ENCODE measurements at regions of chr13 and their contacts with region 1.

Region 1: GRCh38 chr13:75694722-75695121 is 58.6 kb downstream of the LMO7 start:
- DNase-seq: peak; percentile 82
- H3K4me3 Mint-ChIP-seq: no peak overlapping the region
- H3K27ac Mint-ChIP-seq: peak overlapping the region; percentile 27
- H3K4me1 Mint-ChIP-seq: peaks cover 18% of the 10 kb centered on the region
- H3K27me3 Mint-ChIP-seq: no peaks in the 10 kb centered on the region
- CTCF ChIP-seq: no peak

Region 2: DNA sequence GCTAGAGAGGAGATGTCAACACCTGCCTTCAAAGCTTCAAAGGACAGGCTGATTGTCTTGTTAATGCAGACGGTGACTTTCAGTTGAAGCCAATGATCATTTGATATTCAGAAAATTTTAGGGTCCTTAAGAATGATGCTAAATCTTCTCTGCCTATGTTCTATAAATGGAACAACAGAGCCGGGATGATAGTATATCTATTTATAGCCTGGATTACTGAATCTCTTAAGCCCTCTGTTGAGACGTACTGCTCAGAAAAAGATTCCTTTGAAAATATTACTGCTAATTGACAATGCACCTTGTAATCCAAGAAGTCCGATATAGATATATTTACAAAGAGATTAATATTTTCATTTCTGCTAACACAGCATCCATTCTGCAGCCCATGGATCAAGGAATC is 94.4 kb before region 1 on chr13:
- CTCF ChIA-PET with region 1: no interaction called
- POLR2A ChIA-PET with region 1: no interaction called
- intact Hi-C with region 1: no loop called
- DNase-seq: no peak
- H3K4me3 Mint-ChIP-seq: no peak overlapping the region
- H3K27ac Mint-ChIP-seq: no peak overlapping the region
- H3K4me1 Mint-ChIP-seq: peaks cover 4% of the 10 kb centered on the region
- H3K27me3 Mint-ChIP-seq: no peaks in the 10 kb centered on the region
- CTCF ChIP-seq: no peak

Region 3: GRCh38 chr13:75675421-75675820 is 19.3 kb before region 1 on chr13:
- CTCF ChIA-PET with region 1: interaction called, 63 read pairs
- POLR2A ChIA-PET with region 1: interaction called, 4 read pairs
- intact Hi-C with region 1: loop called (anchors 1 kb)
- DNase-seq: peak; percentile 20
- H3K4me3 Mint-ChIP-seq: peak overlapping the region; percentile 79
- H3K27ac Mint-ChIP-seq: peak overlapping the region; percentile 93
- H3K4me1 Mint-ChIP-seq: peaks cover 8% of the 10 kb centered on the region
- H3K27me3 Mint-ChIP-seq: no peaks in the 10 kb centered on the region
- CTCF ChIP-seq: no peak

Region 4: GRCh38 chr13:75751350-75751749 is 56.6 kb after region 1 on chr13:
- CTCF ChIA-PET with region 1: interaction called, 17 read pairs
- POLR2A ChIA-PET with region 1: no interaction called
- intact Hi-C with region 1: no loop called
- DNase-seq: no peak
- H3K4me3 Mint-ChIP-seq: no peak overlapping the region
- H3K27ac Mint-ChIP-seq: no peak overlapping the region
- H3K4me1 Mint-ChIP-seq: no peaks in the 10 kb centered on the region
- H3K27me3 Mint-ChIP-seq: no peaks in the 10 kb centered on the region
- CTCF ChIP-seq: no peak

Region 5: DNA sequence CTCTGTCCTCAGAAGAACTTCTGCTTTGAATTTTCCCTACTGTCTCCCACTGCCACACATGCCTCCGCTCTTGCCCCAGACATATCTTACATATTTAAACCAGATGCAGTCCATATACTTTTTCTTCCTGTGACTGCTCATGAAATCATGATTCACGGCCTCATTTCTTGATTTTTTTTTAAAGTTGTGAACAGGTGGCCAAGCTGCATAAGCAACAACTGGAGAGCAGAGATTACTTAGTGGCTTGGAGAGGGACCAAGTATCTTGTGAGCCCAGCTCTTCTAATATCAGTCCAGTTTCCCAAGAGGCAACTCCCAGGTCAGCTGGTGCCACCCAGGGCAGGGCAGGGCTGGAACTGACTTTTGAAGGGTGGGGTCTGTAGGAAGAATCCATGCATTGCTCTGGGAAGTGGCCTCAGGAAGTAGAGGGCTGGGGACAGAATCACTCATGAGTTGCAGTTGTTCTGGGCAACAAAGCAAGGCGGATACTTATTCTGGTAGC is 93.8 kb after region 1 on chr13:
- CTCF ChIA-PET with region 1: interaction called, 35 read pairs
- POLR2A ChIA-PET with region 1: no interaction called
- intact Hi-C with region 1: loop called (anchors 5 kb)
- DNase-seq: peak; percentile 72
- H3K4me3 Mint-ChIP-seq: no peak overlapping the region
- H3K27ac Mint-ChIP-seq: no peak overlapping the region
- H3K4me1 Mint-ChIP-seq: no peaks in the 10 kb centered on the region
- H3K27me3 Mint-ChIP-seq: no peaks in the 10 kb centered on the region
- CTCF ChIP-seq: no peak

Region 6: DNA sequence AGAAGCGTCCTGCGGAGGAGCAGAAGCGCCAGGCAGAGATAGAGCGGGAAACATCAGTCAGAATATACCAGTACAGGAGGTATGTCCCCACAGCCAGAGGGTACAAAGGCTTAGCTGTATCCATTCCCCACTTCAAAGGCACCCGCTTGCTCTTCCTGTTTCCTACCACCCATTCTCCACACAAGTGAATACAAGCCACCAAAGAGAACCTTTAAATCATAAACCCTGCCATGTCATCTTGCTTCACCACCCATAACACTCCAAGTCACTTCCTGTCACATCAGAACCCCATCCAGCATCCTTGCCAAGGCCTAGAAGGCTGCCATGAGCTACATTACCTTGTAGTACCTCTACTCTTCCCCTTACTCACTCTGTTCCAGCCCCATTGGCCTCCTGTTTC is 147.2 kb after region 1 on chr13:
- CTCF ChIA-PET with region 1: interaction called, 10 read pairs
- POLR2A ChIA-PET with region 1: no interaction called
- intact Hi-C with region 1: no loop called
- DNase-seq: no peak
- H3K4me3 Mint-ChIP-seq: no peak overlapping the region
- H3K27ac Mint-ChIP-seq: peak overlapping the region; percentile 47
- H3K4me1 Mint-ChIP-seq: no peaks in the 10 kb centered on the region
- H3K27me3 Mint-ChIP-seq: no peaks in the 10 kb centered on the region
- CTCF ChIP-seq: no peak

Region 7: GRCh38 chr13:75876360-75877050 is 181.8 kb after region 1 on chr13:
- CTCF ChIA-PET with region 1: interaction called, 72 read pairs
- POLR2A ChIA-PET with region 1: no interaction called
- intact Hi-C with region 1: no loop called
- DNase-seq: peak; percentile 80
- H3K4me3 Mint-ChIP-seq: no peak overlapping the region
- H3K27ac Mint-ChIP-seq: no peak overlapping the region
- H3K4me1 Mint-ChIP-seq: no peaks in the 10 kb centered on the region
- H3K27me3 Mint-ChIP-seq: no peaks in the 10 kb centered on the region
- CTCF ChIP-seq: peak; percentile 90

Measured in MCF 10A (cell line).